Activated CD4-positive, alpha-beta memory T cell treated with anti-CD3 and anti-CD28 coated beads for 36 hours (primary cell): ENCODE measurements at regions of chr11 and their contacts with region 1.

Region 1: DNA sequence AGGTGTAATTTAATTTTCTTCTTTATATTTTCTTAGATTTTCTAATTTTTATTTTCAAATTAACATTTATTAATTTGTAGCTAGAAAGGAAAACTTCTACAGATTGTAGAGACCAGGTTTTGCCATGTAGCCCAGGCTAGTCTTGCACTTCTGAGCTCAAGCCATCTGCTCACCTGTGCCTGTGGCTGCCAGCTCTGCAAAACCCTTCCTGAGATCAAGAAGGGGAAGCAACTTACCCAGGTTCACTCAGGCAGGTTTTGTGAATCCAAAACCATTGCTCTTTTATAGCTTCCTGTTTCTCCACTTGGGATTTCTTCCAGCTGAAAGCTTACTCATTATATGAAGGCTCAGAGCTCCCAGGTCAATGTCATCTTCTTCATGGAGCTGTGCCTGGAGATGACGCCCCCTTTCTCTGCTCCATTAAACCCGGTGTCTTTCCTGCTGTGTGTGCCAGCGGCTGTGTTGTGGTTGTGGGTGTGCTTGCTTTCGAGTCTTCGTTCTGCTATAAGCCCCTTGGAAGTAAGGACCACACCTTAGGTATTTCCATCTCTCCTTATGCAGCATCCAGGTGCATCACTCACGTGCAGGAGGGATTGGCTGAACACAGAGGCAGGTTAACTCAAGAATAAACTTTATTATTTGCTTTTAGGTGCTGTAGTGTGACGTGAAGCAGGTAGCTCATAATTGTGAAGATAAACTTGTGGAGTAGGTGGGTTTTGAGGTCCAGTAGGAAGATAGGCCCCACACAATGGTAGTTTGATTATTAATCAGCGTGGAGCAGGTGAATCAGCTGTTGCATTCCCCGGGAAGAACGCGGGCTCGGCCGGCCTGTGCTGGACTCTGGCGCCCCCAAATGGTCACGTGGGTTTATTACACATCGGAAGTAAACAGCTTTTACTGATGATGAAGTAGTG is 42.2 kb upstream of the INCENP start:
- DNase-seq: peak; percentile 90
- H3K4me3 Mint-ChIP-seq: no peak overlapping the region
- H3K27ac Mint-ChIP-seq: no peak overlapping the region
- H3K4me1 Mint-ChIP-seq: peaks cover 6% of the 10 kb centered on the region
- H3K27me3 Mint-ChIP-seq: peaks cover 4% of the 10 kb centered on the region

Region 2: GRCh38 chr11:61816736-61817455 is 264.7 kb before region 1 on chr11 and contains the start of gene FADS1:
- CTCF ChIA-PET with region 1: interaction called, 12 read pairs
- POLR2A ChIA-PET with region 1: no interaction called
- intact Hi-C with region 1: no loop called
- DNase-seq: peak; percentile 92
- H3K4me3 Mint-ChIP-seq: peak within 1 kb of the TSS; percentile 83
- H3K27ac Mint-ChIP-seq: peak within 1 kb of the TSS; percentile 65
- H3K4me1 Mint-ChIP-seq: peaks cover 10% of the 10 kb centered on the region
- H3K27me3 Mint-ChIP-seq: peaks cover 12% of the 10 kb centered on the region
- total RNA-seq, gene FADS1: 24.9 to 26.5 TPM

Region 3: DNA sequence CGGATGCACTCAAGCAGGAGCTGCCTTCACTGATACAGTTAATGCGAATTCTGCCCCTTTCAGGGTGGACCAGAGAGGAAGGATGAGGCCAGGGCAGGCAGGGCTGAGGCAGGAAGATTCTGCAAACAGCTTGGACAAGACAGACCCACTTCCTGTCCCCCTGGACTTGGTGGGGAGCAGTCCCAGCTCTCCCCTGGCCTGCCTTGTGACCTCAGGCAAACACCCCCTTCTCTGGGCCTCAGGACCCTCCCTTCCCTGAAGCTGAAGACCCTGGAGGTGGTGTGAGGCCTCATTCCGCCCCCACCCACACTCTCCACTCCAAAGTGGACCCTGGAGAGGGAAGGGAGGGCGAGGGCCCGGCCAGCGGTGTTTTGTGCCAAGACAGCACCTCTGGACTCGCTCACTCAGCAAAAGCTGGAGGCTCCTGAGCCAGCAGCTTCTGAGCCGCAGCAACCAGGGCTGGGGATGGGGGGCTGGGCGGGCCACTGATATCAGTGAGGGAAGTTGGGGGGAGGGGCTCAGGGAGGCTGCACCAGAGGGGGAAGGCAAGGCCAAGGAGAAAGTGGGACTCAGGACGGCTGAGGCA is 172.8 kb before region 1 on chr11:
- CTCF ChIA-PET with region 1: interaction called, 417 read pairs
- POLR2A ChIA-PET with region 1: interaction called, 3 read pairs
- intact Hi-C with region 1: no loop called
- DNase-seq: no peak
- H3K4me3 Mint-ChIP-seq: no peak overlapping the region
- H3K27ac Mint-ChIP-seq: no peak overlapping the region
- H3K4me1 Mint-ChIP-seq: no peaks in the 10 kb centered on the region
- H3K27me3 Mint-ChIP-seq: peaks cover 3% of the 10 kb centered on the region

Region 4: DNA sequence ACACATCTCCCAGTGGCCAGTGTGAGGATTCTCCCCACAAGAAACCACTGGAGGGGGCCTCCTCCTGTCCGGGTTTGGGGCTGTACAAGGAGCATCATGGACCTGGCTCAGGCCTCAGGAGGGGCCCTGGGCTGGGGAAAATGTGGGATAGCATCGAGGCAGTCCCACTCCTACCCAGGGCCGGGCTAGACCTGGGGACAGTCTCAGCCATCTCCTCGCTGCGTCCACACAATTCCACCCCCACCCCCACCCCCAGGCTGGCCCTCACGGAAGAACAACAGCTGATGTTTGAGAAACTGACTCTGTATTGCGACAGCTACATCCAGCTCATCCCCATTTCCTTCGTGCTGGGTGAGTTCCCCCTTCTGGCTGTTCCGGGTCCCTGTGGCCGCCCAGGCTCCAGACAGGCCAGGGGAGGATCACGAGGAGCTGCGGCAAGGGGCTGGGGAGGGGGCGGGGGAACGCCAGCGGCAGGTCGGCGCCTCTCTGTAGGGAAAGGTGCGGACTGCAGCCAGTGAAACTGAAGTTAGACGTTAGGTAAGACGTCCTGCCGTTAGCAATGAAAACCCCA is 126.7 kb before region 1 on chr11:
- CTCF ChIA-PET with region 1: interaction called, 111 read pairs
- POLR2A ChIA-PET with region 1: no interaction called
- intact Hi-C with region 1: no loop called
- DNase-seq: no peak
- H3K4me3 Mint-ChIP-seq: no peak overlapping the region
- H3K27ac Mint-ChIP-seq: no peak overlapping the region
- H3K4me1 Mint-ChIP-seq: peaks cover 13% of the 10 kb centered on the region
- H3K27me3 Mint-ChIP-seq: peaks cover 9% of the 10 kb centered on the region

Region 5: DNA sequence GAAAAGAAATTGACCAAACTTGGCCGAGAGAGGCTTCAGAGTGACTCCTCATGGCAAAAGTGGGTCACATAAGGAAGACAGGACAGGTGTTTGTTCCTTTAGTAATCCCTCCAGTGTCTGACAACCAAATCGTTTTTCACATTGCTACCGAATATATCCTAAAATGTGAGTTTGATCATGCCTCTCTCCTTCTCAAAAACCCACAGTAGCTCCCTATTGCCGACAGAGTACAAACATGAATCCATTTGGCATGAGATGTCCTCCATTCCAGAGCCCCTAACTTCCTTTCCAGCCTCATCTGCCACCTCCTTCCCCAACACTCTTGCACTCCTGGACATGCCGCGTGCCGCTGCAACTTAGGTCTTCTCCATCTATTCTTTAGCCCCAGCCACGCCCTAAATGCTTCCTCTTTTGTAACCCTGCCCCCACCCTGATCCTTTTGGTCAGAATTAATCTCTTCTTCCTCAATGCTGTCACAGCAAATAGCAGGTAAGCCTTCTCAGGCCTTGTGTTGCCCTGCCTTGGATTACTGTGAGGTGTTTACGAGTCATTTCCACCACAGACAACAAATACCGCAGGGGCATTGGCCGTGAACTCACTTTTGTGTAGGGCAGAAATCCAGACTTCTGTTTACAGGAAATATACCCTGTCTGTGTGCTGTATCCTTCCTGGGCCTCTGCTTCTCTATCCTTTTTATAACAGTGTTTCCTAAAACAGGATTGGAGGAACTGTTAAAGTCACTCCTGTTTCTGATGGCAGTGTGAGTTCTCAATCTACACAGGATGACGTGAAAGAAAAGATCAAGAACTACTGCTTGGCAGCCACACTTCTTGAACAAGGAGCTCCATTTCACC is 48.2 kb before region 1 on chr11:
- CTCF ChIA-PET with region 1: interaction called, 13 read pairs
- POLR2A ChIA-PET with region 1: no interaction called
- intact Hi-C with region 1: no loop called
- DNase-seq: peak; percentile 15
- H3K4me3 Mint-ChIP-seq: peak overlapping the region; percentile 9
- H3K27ac Mint-ChIP-seq: no peak overlapping the region
- H3K4me1 Mint-ChIP-seq: peaks cover 10% of the 10 kb centered on the region
- H3K27me3 Mint-ChIP-seq: peaks cover 3% of the 10 kb centered on the region

Region 6: GRCh38 chr11:62108017-62108750 is 26.5 kb after region 1 on chr11:
- CTCF ChIA-PET with region 1: interaction called, 104 read pairs
- POLR2A ChIA-PET with region 1: no interaction called
- intact Hi-C with region 1: no loop called
- DNase-seq: peak; percentile 34
- H3K4me3 Mint-ChIP-seq: no peak overlapping the region
- H3K27ac Mint-ChIP-seq: no peak overlapping the region
- H3K4me1 Mint-ChIP-seq: peaks cover 17% of the 10 kb centered on the region
- H3K27me3 Mint-ChIP-seq: no peaks in the 10 kb centered on the region